Ascending aorta (tissue), 2 donors: ENCODE measurements at regions of chr9 and their contacts with region 1.

Region 1: DNA sequence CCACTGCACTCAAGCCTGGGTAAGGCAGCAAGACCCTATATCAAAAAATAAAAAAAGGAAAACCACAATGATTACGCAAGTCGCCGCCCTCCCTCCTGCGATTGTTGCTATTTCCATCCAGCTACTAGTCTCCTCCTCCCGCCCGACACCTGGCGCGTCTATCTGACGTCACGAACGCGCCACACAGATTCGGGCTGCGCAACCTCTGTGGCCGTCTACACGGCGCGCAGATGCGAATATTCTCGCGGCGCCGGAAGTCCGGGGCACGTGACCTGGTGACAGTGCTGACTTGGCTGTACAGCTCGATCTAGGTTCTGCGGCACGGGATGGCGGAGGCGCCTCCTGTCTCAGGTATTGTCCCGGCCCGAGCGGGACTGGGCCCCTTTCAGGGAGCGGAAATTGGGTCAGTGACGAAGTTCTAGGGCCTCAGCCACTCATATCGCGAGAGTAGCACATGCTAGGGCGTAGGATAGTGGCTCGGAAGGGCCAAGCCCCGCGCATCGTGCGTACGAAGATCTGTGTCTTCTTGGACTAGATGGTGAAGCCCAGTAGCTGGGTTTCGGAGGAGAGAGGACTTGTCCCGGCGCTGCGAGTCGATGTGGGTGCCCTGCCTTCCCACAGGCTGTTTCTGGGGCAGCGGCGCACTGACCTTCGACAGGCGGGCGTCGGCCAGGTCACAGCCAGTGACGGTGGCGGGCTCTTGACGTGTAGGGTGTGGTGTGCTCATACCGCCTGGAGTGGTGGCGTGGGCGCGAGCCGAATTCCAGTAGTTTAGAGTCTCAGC is at the start of gene NFX1:
- DNase-seq: peak; percentile 97 to 99
- H3K4me3 ChIP-seq: peak within 1 kb of the TSS; percentile 83 to 95
- H3K27ac ChIP-seq: peak within 1 kb of the TSS; percentile 99
- H3K4me1 ChIP-seq: peaks cover 5 to 26% of the 10 kb centered on the region in 2 donors
- H3K27me3 ChIP-seq: no peaks in the 10 kb centered on the region
- CTCF ChIP-seq: no peak
- total RNA-seq, gene NFX1: 14.2 TPM

Region 2: GRCh38 chr9:32915802-32916201 is 374.6 kb before region 1 on chr9:
- intact Hi-C with region 1: no loop called
- DNase-seq: no peak
- H3K4me3 ChIP-seq: no peak overlapping the region
- H3K27ac ChIP-seq: no peak overlapping the region
- H3K4me1 ChIP-seq: no peaks in the 10 kb centered on the region
- H3K27me3 ChIP-seq: no peaks in the 10 kb centered on the region
- CTCF ChIP-seq: no peak

Region 3: GRCh38 chr9:33264473-33265177 is 25.8 kb before region 1 on chr9 and contains the starts of genes BAG1 and CHMP5:
- intact Hi-C with region 1: loop called (anchors 1 kb)
- DNase-seq: peak; percentile 98 to 100
- H3K4me3 ChIP-seq: peak within 1 kb of the TSS; percentile 90 to 95
- H3K27ac ChIP-seq: peak within 1 kb of the TSS; percentile 90 to 92
- H3K4me1 ChIP-seq: peaks cover 7 to 9% of the 10 kb centered on the region in 2 donors
- H3K27me3 ChIP-seq: no peaks in the 10 kb centered on the region
- CTCF ChIP-seq: peak in 1 of 3 experiments; percentile 37
- total RNA-seq, gene BAG1: 58.5 TPM
- total RNA-seq, gene CHMP5: 47.5 TPM

Region 4: GRCh38 chr9:33473643-33474352 is 183.4 kb after region 1 on chr9 and contains the start of gene NOL6:
- intact Hi-C with region 1: loop called (anchors 5 kb)
- DNase-seq: peak; percentile 96 to 99
- H3K4me3 ChIP-seq: peak within 1 kb of the TSS; percentile 74 to 98
- H3K27ac ChIP-seq: peak within 1 kb of the TSS; percentile 61 to 64
- H3K4me1 ChIP-seq: peaks cover 8 to 10% of the 10 kb centered on the region in 2 donors
- H3K27me3 ChIP-seq: no peaks in the 10 kb centered on the region
- CTCF ChIP-seq: no peak
- total RNA-seq, gene NOL6: 28.6 TPM

Region 5: GRCh38 chr9:34884732-34885131 is 1594.3 kb after region 1 on chr9:
- intact Hi-C with region 1: no loop called
- DNase-seq: no peak
- H3K4me3 ChIP-seq: no peak overlapping the region
- H3K27ac ChIP-seq: no peak overlapping the region
- H3K4me1 ChIP-seq: no peaks in the 10 kb centered on the region
- H3K27me3 ChIP-seq: no peaks in the 10 kb centered on the region
- CTCF ChIP-seq: no peak